ENCODE measurements at regions of chr1 and their contacts with region 1.

Region 1: GRCh38 chr1:234499119-234499942 is 20.4 kb upstream of the TARBP1 start:
- DNase-seq: peak; percentile 91
- ATAC-seq: peak; percentile 63
- H3K4me3 Mint-ChIP-seq: no peak overlapping the region
- H3K27ac Mint-ChIP-seq: peak overlapping the region; percentile 82
- H3K4me1 Mint-ChIP-seq: peaks cover 64% of the 10 kb centered on the region
- H3K27me3 Mint-ChIP-seq: peaks cover 6% of the 10 kb centered on the region
- CTCF ChIP-seq: peak; percentile 98

Region 2: DNA sequence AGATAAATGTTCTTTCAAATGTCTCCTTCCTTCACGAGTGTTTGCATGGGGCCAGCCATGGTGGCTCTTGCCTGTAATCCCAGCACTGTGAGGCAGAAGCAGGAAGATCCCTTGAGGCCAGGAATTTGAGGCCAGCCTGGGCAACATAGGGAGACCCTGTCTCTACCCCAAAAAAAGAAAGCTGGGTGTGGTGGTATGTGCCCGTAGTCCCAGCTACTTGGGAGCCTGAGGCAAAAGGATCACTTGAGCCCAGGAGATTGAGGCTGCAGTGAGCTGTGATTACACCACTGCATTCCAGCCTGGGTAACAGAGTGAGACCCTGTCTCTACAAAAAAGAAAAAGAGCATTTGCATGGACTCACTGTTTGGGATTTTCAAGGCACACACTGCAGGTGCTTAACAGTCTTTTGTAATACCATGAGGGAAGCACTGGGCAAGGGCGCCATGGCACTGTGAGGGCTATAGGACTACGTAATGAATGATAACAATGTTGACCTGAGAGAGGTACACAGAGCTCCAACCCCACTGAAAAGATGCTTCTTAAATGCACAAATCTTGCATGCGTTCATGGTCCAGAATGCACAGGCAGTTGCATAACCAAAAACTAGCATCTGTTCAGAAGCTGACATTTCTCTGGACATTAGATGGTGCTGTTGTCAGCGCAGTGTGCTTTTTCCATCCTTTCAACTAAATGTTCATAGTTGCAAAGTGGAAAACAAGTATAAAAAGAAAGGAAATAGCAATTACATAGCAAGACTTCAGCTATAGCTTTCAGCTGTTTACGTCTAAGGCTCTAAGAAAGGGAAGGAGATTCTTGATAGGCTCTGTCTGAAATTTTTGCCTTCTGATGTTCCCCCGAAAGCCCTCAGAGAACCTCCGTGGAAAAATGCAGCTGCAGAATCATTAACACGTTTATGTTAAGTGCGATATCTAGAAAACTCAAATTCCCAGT is 12.6 kb before region 1 on chr1:
- CTCF ChIA-PET with region 1: interaction called, 18 read pairs
- POLR2A ChIA-PET with region 1: interaction called, 6 read pairs
- intact Hi-C with region 1: no loop called
- DNase-seq: peak; percentile 50
- ATAC-seq: peak; percentile 48
- H3K4me3 Mint-ChIP-seq: no peak overlapping the region
- H3K27ac Mint-ChIP-seq: peak overlapping the region; percentile 33
- H3K4me1 Mint-ChIP-seq: peaks cover 33% of the 10 kb centered on the region
- H3K27me3 Mint-ChIP-seq: peaks cover 14% of the 10 kb centered on the region
- CTCF ChIP-seq: peak; percentile 56

Region 3: GRCh38 chr1:234544087-234544579 is 44.8 kb after region 1 on chr1:
- CTCF ChIA-PET with region 1: interaction called, 12 read pairs
- POLR2A ChIA-PET with region 1: interaction called, 4 read pairs
- intact Hi-C with region 1: no loop called
- DNase-seq: peak; percentile 74
- ATAC-seq: peak; percentile 75
- H3K4me3 Mint-ChIP-seq: no peak overlapping the region
- H3K27ac Mint-ChIP-seq: peak overlapping the region; percentile 81
- H3K4me1 Mint-ChIP-seq: peaks cover 19% of the 10 kb centered on the region
- H3K27me3 Mint-ChIP-seq: peaks cover 3% of the 10 kb centered on the region
- CTCF ChIP-seq: no peak

Region 4: GRCh38 chr1:234599617-234600417 is 100.5 kb after region 1 on chr1:
- CTCF ChIA-PET with region 1: interaction called, 18 read pairs
- POLR2A ChIA-PET with region 1: interaction called, 11 read pairs
- intact Hi-C with region 1: loop called (anchors 2 kb)
- DNase-seq: peak; percentile 86
- ATAC-seq: peak; percentile 77
- H3K4me3 Mint-ChIP-seq: peak overlapping the region; percentile 87
- H3K27ac Mint-ChIP-seq: peak overlapping the region; percentile 98
- H3K4me1 Mint-ChIP-seq: peaks cover 53% of the 10 kb centered on the region
- H3K27me3 Mint-ChIP-seq: no peaks in the 10 kb centered on the region
- CTCF ChIP-seq: no peak

Region 5: DNA sequence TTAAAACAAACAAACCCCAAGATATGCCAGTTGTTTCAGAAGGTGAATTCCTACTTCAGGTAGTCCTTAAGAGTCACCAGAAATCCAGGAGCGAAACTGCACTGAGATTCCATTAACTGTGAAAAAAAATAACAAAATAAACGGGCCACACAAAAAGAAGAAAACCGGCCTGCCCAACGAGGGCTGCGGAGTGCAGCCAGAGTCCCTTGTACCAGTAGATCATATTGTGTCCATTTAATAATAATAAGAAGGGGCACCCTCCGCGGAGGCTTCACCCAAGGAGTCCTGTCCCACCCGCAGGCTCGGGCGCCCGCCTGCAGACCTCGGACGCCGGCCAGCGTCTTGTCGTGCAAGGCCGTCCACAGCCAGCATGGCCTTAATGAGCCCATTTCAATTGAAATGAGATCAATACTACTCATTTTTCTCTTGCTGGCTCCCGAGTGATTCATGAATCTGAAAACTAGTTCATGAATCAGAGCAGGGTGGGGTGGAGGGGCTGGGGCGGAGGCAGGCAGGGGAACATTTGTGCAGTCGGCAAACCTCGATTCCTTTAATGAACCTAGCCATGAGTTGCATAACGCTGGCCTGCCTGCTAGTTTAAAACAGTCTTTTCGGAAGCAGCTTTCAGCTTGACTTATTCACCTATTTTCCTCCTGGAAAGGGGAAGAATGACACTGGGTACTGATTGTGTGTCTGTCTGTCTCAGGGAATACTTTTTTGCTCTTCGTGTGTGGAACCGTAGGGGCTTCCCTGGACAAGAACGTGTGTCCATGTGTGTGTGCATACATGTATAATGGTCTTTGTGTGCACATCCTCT is 223.8 kb after region 1 on chr1:
- CTCF ChIA-PET with region 1: interaction called, 3 read pairs
- POLR2A ChIA-PET with region 1: no interaction called
- intact Hi-C with region 1: loop called (anchors 5 kb)
- DNase-seq: peak; percentile 89
- ATAC-seq: peak; percentile 63
- H3K4me3 Mint-ChIP-seq: peak overlapping the region; percentile 74
- H3K27ac Mint-ChIP-seq: peak overlapping the region; percentile 99
- H3K4me1 Mint-ChIP-seq: peaks cover 70% of the 10 kb centered on the region
- H3K27me3 Mint-ChIP-seq: no peaks in the 10 kb centered on the region
- CTCF ChIP-seq: no peak

Region 6: DNA sequence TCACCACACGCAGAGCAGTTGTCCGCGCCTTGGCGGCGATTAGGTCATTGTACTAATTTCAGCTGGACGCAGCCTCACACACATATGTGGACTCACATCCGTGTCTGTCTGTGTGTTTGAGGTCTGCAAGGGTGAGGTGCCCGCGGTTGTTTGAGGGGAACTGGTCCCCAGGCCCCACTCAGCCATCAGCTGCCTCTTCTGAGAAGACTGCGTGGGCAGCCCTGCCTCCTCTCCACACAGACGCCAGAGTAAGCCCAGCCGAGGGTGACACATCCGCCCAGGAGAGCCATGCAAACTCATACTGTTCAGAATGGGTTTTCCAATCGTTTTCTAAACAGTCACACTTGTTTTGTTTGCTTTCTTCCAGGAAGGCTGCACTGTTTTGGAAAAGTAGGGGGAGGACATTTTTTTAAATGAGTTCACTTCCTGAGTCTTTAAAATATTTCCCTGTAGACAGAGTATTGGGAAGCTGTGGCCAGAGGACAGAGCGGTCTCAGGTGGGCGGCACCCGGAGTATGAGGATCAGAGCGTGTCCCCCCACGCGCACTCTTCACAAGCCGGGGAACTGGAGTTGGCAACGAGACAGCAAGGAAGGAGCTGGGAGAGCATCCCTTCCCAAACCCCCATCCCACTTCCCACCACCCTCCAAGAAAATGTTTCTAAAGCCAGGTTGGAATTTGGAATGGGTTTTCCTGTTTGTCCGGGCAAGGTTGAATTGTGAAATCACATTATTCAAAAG is 576.0 kb after region 1 on chr1:
- CTCF ChIA-PET with region 1: no interaction called
- POLR2A ChIA-PET with region 1: no interaction called
- intact Hi-C with region 1: loop called (anchors 5 kb)
- DNase-seq: peak; percentile 86
- ATAC-seq: peak; percentile 56
- H3K4me3 Mint-ChIP-seq: peak overlapping the region; percentile 51
- H3K27ac Mint-ChIP-seq: peak overlapping the region; percentile 96
- H3K4me1 Mint-ChIP-seq: peaks cover 31% of the 10 kb centered on the region
- H3K27me3 Mint-ChIP-seq: no peaks in the 10 kb centered on the region
- CTCF ChIP-seq: no peak